B cell (primary cell): ENCODE measurements at regions of chr3 and their contacts with region 1.

Region 1: DNA sequence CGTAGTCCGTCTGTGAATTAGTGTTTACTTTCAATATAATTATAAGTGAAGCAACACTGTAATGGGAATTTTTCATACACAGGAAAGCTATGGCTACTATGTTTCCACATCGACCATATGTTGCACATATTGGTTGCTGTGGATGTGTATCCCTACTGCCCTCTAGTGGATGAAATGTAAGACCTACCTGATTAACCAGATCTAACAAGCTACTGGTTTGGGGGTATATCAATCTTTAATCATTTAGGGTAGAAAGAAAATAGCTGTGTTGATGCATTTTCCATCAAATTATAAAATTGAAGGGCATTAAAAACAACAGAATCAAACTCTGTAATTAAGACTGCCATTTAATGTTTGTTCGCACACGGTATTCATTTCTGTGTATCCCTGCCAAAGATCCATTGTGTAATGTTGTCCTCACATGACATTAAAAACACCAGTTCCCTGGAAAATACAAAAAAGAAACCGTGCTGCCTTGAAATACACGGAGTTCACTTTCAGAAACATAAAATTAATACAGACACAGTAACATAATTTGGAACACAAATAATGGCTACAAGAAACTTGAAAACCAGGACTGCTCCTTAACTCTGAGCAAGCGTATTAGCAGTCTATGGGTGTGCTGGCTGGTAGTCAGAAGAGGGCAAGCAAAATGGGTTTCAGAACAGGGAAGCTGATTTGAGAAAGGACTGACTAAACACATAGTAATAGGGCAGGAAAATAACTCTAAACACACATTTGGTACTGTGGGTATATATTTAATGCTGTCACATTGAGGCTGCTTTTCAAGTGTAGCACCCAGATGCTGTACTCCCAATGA is 125.1 kb downstream of the TIGIT start:
- DNase-seq: peak; percentile 78
- ATAC-seq: peak; percentile 91
- H3K4me3 ChIP-seq: no peak overlapping the region
- H3K4me3 Mint-ChIP-seq: no peak overlapping the region
- H3K27ac ChIP-seq: no peak overlapping the region
- H3K27ac Mint-ChIP-seq: no peak overlapping the region
- H3K4me1 ChIP-seq: peaks cover 0 to 6% of the 10 kb centered on the region in 2 donors
- H3K4me1 Mint-ChIP-seq: peaks cover 32% of the 10 kb centered on the region
- H3K27me3 ChIP-seq: no peaks in the 10 kb centered on the region
- H3K27me3 Mint-ChIP-seq: no peaks in the 10 kb centered on the region
- CTCF ChIP-seq: peak; percentile 85

Region 2: GRCh38 chr3:114213627-114214541 is 205.1 kb before region 1 on chr3:
- CTCF ChIA-PET with region 1: interaction called, 9 read pairs
- POLR2A ChIA-PET with region 1: no interaction called
- intact Hi-C with region 1: loop called (anchors 2 kb)
- DNase-seq: peak; percentile 92
- ATAC-seq: peak; percentile 76
- H3K4me3 ChIP-seq: peak overlapping the region; percentile 42 to 76 (median 69)
- H3K4me3 Mint-ChIP-seq: no peak overlapping the region
- H3K27ac ChIP-seq: peak overlapping the region; percentile 95 to 98
- H3K27ac Mint-ChIP-seq: no peak overlapping the region
- H3K4me1 ChIP-seq: peaks cover 66 to 71% of the 10 kb centered on the region in 2 donors
- H3K4me1 Mint-ChIP-seq: peaks cover 28% of the 10 kb centered on the region
- H3K27me3 ChIP-seq: no peaks in the 10 kb centered on the region
- H3K27me3 Mint-ChIP-seq: no peaks in the 10 kb centered on the region
- CTCF ChIP-seq: no peak

Region 3: DNA sequence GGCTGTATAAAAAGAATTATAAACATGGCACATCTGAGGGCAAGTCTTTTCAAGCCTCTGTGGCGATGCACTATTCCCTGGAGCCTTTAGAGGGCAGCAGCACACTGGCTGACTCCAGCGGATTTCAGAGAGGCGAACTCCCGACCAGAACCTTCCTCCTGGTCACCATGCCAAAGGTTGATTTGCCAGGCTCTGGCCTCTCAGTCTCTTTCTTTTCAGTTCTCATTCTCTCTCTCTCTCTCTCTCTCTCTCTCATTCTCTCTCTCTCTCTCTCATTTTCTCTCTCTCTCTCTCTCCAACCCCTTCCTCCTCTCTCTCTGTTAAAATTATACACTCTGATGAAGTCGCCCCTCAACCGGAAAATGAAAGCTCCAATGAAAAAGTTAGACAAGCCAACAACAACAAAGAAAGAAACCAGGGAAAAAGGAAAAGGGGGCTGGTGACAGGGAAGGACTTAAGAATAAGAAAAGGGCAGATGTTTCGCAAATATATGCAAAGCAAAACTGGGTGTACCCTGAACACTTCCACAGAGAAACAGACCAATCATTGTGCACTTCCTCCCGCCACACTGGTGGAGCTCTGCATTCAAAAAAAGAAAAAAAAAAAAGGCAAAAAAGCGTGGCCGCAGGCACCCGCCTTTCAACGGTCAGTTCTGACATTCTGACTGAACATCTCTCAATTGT is 34.9 kb before region 1 on chr3:
- CTCF ChIA-PET with region 1: interaction called, 55 read pairs
- POLR2A ChIA-PET with region 1: interaction called, 7 read pairs
- intact Hi-C with region 1: loop called (anchors 1 kb)
- DNase-seq: peak; percentile 73
- ATAC-seq: peak; percentile 91
- H3K4me3 ChIP-seq: peak overlapping the region in 4 of 5 experiments; percentile 26 to 58 (median 45)
- H3K4me3 Mint-ChIP-seq: peak overlapping the region; percentile 75
- H3K27ac ChIP-seq: peak overlapping the region in 1 of 2 donors; percentile 67
- H3K27ac Mint-ChIP-seq: peak overlapping the region; percentile 38
- H3K4me1 ChIP-seq: peaks cover 4 to 11% of the 10 kb centered on the region in 2 donors
- H3K4me1 Mint-ChIP-seq: peaks cover 2% of the 10 kb centered on the region
- H3K27me3 ChIP-seq: no peaks in the 10 kb centered on the region
- H3K27me3 Mint-ChIP-seq: no peaks in the 10 kb centered on the region
- CTCF ChIP-seq: peak; percentile 92

Region 4: GRCh38 chr3:114405202-114405990 is 13.5 kb before region 1 on chr3:
- CTCF ChIA-PET with region 1: interaction called, 36 read pairs
- POLR2A ChIA-PET with region 1: no interaction called
- intact Hi-C with region 1: no loop called
- DNase-seq: peak; percentile 56
- ATAC-seq: peak; percentile 77
- H3K4me3 ChIP-seq: no peak overlapping the region
- H3K4me3 Mint-ChIP-seq: no peak overlapping the region
- H3K27ac ChIP-seq: no peak overlapping the region
- H3K27ac Mint-ChIP-seq: peak overlapping the region; percentile 4
- H3K4me1 ChIP-seq: peaks cover 3 to 4% of the 10 kb centered on the region in 2 donors
- H3K4me1 Mint-ChIP-seq: peaks cover 24% of the 10 kb centered on the region
- H3K27me3 ChIP-seq: no peaks in the 10 kb centered on the region
- H3K27me3 Mint-ChIP-seq: no peaks in the 10 kb centered on the region
- CTCF ChIP-seq: no peak

Region 5: DNA sequence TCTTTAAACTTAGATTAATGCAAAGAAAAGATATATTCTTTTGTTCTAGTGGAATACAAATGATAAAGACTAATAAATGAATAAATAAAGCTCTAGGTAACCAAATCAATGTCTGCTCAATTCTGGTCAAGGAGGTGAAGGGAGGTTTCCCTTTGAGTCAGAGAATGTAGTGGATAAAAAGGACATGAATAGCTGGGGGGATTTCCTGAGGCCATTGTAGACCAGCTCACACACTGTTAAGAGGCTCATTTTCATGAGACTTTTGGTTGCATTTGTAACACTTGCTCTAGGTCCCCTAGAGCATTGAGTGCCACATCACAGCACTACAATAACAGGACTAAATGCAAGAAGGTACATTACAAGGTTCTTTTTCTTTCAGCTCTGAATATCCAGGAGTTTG is 45.6 kb after region 1 on chr3:
- CTCF ChIA-PET with region 1: interaction called, 12 read pairs
- POLR2A ChIA-PET with region 1: no interaction called
- intact Hi-C with region 1: no loop called
- DNase-seq: peak; percentile 31
- ATAC-seq: peak; percentile 66
- H3K4me3 ChIP-seq: no peak overlapping the region
- H3K4me3 Mint-ChIP-seq: no peak overlapping the region
- H3K27ac ChIP-seq: no peak overlapping the region
- H3K27ac Mint-ChIP-seq: no peak overlapping the region
- H3K4me1 ChIP-seq: peaks cover 11 to 15% of the 10 kb centered on the region in 2 donors
- H3K4me1 Mint-ChIP-seq: peaks cover 25% of the 10 kb centered on the region
- H3K27me3 ChIP-seq: no peaks in the 10 kb centered on the region
- H3K27me3 Mint-ChIP-seq: no peaks in the 10 kb centered on the region
- CTCF ChIP-seq: no peak

Region 6: GRCh38 chr3:114597013-114597412 is 178.1 kb after region 1 on chr3:
- CTCF ChIA-PET with region 1: no interaction called
- POLR2A ChIA-PET with region 1: no interaction called
- intact Hi-C with region 1: no loop called
- DNase-seq: no peak
- ATAC-seq: no peak
- H3K4me3 ChIP-seq: no peak overlapping the region
- H3K4me3 Mint-ChIP-seq: no peak overlapping the region
- H3K27ac ChIP-seq: no peak overlapping the region
- H3K27ac Mint-ChIP-seq: no peak overlapping the region
- H3K4me1 ChIP-seq: no peaks in the 10 kb centered on the region
- H3K4me1 Mint-ChIP-seq: no peaks in the 10 kb centered on the region
- H3K27me3 ChIP-seq: no peaks in the 10 kb centered on the region
- H3K27me3 Mint-ChIP-seq: no peaks in the 10 kb centered on the region
- CTCF ChIP-seq: no peak